ENCODE measurements at regions of chrX and their contacts with region 1.

Region 1: GRCh38 chrX:49043220-49043986 is at the start of gene TFE3:
- DNase-seq: peak; percentile 97
- ATAC-seq: peak; percentile 87
- H3K4me3 ChIP-seq: peak within 1 kb of the TSS; percentile 69 to 77 (median 73)
- H3K4me3 Mint-ChIP-seq: peak within 1 kb of the TSS; percentile 91
- H3K27ac ChIP-seq: peak within 1 kb of the TSS; percentile 91 to 96
- H3K27ac Mint-ChIP-seq: peak within 1 kb of the TSS; percentile 92
- H3K4me1 ChIP-seq: peaks cover 12 to 25% of the 10 kb centered on the region in 2 donors
- H3K4me1 Mint-ChIP-seq: peaks cover 28% of the 10 kb centered on the region
- H3K27me3 ChIP-seq: no peaks in the 10 kb centered on the region
- H3K27me3 Mint-ChIP-seq: no peaks in the 10 kb centered on the region
- CTCF ChIP-seq: peak; percentile 62
- total RNA-seq, gene TFE3: 38.9 and 42.1 TPM in 2 replicates

Region 2: DNA sequence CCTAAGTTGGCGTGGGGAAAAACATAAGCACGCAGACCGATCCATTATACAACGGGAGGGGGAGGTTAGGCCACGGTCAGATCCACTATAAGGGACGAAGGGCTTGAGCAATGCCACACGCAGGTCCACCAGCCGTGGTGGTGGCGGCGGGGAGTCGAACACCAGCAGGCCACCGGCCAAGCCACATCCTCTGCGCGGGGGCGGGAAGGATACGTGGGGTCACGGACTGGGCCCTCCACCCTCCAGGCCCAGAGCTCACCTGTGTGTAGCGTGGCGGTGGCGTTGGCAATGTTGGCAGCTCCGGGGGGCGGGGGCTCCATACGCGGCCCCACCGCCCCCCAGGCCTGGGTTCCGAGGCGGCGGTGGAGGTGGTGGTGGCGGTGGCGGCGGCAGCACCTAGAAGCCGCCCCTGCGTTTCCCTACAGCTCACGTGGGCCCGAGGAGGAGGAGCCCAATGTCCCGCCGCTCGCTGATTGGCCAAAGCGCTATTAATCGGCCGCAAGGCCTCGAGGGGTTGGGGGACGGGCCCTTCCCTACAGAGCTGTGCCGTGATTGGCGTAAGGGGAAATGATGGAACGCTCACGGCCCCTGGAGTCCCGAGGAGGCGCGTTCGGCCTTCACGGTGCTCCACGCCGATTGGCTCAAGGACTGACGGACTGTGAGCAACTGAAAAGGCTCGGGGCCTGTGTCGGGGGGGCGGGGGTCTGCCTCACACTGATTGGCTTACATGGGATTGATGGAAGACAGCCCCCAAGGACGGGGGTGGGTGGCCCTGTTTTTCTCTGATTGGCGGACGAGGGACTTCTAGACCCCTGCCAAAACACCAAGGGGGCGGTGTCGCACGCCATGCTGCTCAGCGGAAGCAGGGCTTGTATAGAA is 1393.0 kb before region 1 on chrX and contains the start of gene ELK1:
- CTCF ChIA-PET with region 1: no interaction called
- POLR2A ChIA-PET with region 1: no interaction called
- intact Hi-C with region 1: loop called (anchors 10 kb)
- DNase-seq: peak; percentile 94
- ATAC-seq: peak; percentile 91
- H3K4me3 ChIP-seq: peak within 1 kb of the TSS in 4 of 5 experiments; percentile 68 to 77 (median 75)
- H3K4me3 Mint-ChIP-seq: peak within 1 kb of the TSS; percentile 93
- H3K27ac ChIP-seq: peak within 1 kb of the TSS; percentile 69 to 73
- H3K27ac Mint-ChIP-seq: peak within 1 kb of the TSS; percentile 94
- H3K4me1 ChIP-seq: peaks cover 11 to 26% of the 10 kb centered on the region in 2 donors
- H3K4me1 Mint-ChIP-seq: peaks cover 29% of the 10 kb centered on the region
- H3K27me3 ChIP-seq: no peaks in the 10 kb centered on the region
- H3K27me3 Mint-ChIP-seq: no peaks in the 10 kb centered on the region
- CTCF ChIP-seq: no peak
- total RNA-seq, gene ELK1: 20.8 and 22.7 TPM in 2 replicates

Region 3: DNA sequence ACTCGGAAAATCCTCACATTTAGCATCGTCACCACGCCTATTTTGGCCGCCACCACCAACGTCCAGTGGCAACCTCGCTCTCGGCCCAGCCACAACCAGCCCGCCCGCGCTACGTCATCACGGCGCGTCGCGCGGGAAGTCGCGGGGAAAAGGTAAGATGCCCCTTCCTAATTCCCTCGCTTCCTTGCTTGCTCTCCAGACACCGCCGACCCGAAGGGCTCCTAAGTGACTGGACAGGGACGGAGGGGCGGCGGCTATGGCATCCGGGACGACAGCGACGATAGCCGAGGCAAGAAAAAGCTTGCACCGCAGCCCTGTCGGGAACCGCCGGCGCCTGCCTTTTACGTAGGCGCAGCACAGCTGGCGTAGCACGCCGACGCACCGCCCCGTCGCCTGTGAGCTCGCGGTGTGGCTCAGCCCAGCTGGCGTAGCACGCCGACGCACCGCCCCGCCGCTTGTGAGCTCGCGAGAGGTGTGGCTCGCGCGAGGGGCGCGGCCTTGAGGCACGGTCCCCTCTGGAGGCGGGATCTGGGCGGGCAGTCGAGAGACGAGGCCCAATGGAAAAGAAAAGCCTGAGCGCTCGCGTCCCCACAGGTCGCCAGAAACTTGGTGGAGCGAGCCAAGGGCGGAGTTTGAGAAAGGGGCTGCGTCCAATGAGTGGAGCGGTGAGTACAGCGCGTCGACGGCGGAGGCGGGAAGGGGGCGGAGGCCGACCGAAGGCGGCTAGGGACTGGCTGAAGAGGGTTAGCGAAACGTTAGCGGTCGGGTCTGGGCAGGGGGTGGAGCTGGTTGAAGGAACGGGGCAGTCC is 241.9 kb before region 1 on chrX and contains the start of gene HDAC6:
- CTCF ChIA-PET with region 1: no interaction called
- POLR2A ChIA-PET with region 1: no interaction called
- intact Hi-C with region 1: loop called (anchors 5 kb)
- DNase-seq: peak; percentile 97
- ATAC-seq: peak; percentile 80
- H3K4me3 ChIP-seq: peak within 1 kb of the TSS; percentile 65 to 82 (median 76)
- H3K4me3 Mint-ChIP-seq: peak within 1 kb of the TSS; percentile 96
- H3K27ac ChIP-seq: peak within 1 kb of the TSS; percentile 95 to 96
- H3K27ac Mint-ChIP-seq: peak within 1 kb of the TSS; percentile 98
- H3K4me1 ChIP-seq: peaks cover 4 to 16% of the 10 kb centered on the region in 2 donors
- H3K4me1 Mint-ChIP-seq: peaks cover 14% of the 10 kb centered on the region
- H3K27me3 ChIP-seq: no peaks in the 10 kb centered on the region
- H3K27me3 Mint-ChIP-seq: no peaks in the 10 kb centered on the region
- CTCF ChIP-seq: no peak
- total RNA-seq, gene HDAC6: 168 and 170 TPM in 2 replicates

Region 4: DNA sequence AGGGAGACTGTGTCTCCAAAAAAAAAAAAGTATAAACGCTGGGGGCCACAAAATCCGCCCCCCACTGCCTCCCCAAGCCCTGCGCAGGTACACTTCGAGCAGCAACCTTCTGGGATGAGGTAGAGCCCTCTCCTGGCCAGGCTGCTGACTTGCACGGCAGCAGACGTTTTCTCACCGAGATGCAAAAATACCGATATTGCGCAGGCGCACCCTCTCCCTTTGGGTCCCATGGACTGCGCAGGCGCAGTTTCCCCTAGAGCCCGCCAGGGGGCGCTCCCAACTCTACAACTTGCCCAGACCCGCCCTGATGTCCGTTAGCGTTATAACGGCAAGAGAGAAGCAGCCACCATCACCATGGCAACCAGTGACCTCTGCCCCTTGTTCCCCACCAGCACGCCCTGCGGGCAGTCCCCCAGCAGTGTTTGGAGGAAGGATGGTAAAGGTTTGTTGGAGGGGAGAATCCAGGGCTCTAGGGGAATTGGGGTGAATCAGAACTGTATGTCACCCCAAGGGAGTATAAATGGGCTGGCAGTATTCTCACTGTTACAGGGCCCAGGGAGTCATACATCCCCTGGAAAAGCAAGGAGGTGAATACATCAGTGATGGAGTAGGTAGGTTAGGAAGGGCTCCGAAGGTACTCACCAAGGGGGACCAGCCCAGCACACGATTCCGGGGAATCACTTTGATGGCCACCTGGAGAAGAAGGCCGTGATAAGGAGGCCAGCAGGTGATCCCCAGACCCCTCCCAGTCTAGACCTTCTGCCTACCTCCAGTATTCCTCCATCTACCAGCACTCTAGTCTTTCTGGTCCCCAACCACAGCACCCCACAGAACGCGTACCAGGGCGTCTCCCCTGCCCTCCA is 126.0 kb before region 1 on chrX:
- CTCF ChIA-PET with region 1: no interaction called
- POLR2A ChIA-PET with region 1: no interaction called
- intact Hi-C with region 1: loop called (anchors 1 kb)
- DNase-seq: peak; percentile 92
- ATAC-seq: peak; percentile 46
- H3K4me3 ChIP-seq: peak overlapping the region; percentile 67 to 94 (median 86)
- H3K4me3 Mint-ChIP-seq: peak overlapping the region; percentile 98
- H3K27ac ChIP-seq: peak overlapping the region; percentile 84
- H3K27ac Mint-ChIP-seq: peak overlapping the region; percentile 96
- H3K4me1 ChIP-seq: peaks cover 34 to 56% of the 10 kb centered on the region in 2 donors
- H3K4me1 Mint-ChIP-seq: peaks cover 51% of the 10 kb centered on the region
- H3K27me3 ChIP-seq: no peaks in the 10 kb centered on the region
- H3K27me3 Mint-ChIP-seq: no peaks in the 10 kb centered on the region
- CTCF ChIP-seq: peak; percentile 74

Region 5: DNA sequence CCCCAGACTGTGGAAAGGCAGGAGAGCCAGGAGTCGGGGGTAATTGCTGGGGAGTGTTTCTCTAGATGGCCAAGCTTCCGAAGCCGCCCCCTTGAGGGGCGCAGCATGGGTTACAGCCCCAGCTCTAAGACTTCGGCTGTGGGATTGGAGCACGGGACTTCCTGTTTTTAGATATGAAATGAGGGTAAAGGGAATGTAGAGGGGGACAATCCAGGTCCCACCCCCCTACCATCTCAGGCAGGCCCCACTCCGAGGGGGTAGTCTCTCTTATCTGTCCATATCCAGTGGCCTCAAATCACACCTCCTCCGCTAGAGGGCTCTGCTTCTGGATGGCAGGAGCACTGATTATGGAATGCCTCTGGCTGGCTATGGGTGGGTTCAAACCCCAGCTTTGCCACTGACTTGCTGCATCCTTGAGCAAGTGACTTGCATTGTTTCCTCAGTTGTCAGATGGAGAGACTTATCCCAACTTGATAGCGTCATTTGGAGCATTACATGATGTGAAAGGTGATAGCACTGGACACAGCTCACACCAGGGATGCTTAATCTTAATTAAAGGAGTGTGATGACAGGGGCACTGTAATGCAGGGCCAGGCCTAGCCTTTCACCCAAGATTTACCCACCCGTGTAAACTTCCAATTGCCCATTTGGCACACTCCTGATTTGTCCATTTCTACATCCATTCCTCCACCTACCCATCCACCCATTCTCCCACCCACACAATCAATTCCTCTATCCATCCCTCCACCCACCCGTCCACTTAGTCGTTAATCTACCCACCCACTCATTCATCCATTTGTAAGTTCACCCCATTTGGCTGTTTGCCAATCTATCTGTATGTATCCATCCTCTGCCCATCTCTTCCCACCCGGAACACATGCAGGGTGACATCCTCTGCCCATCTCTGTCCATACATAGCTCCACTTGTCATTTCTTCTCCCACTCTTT is 70.9 kb before region 1 on chrX:
- CTCF ChIA-PET with region 1: interaction called, 16 read pairs
- POLR2A ChIA-PET with region 1: no interaction called
- intact Hi-C with region 1: loop called (anchors 1 kb)
- DNase-seq: peak; percentile 55
- ATAC-seq: peak; percentile 61
- H3K4me3 ChIP-seq: peak overlapping the region in 4 of 5 experiments; percentile 13 to 41 (median 28)
- H3K4me3 Mint-ChIP-seq: peak overlapping the region; percentile 66
- H3K27ac ChIP-seq: no peak overlapping the region
- H3K27ac Mint-ChIP-seq: peak overlapping the region; percentile 50
- H3K4me1 ChIP-seq: peaks cover 12 to 14% of the 10 kb centered on the region in 2 donors
- H3K4me1 Mint-ChIP-seq: peaks cover 15% of the 10 kb centered on the region
- H3K27me3 ChIP-seq: no peaks in the 10 kb centered on the region
- H3K27me3 Mint-ChIP-seq: no peaks in the 10 kb centered on the region
- CTCF ChIP-seq: peak; percentile 56

Region 6: DNA sequence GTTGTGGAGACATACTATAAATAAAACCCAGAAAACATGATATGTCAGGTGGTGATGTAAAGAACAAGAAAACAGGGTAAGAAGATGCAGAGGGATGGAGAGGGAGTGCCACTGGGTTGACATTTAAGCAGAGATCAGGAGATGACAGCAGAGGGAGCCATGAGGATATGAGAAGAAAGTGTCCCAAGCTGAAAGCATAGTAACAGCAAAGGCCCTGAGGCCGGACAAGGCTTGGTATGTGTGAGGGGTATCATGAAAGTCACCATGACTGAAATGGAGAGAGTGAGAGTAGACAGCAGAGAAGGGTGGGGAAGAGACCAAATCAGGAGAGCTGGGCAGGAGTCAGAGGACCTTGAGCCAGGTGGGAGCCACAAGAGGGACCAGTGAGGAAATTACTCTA is 76.7 kb after region 1 on chrX:
- CTCF ChIA-PET with region 1: no interaction called
- POLR2A ChIA-PET with region 1: no interaction called
- intact Hi-C with region 1: loop called (anchors 1 kb)
- DNase-seq: no peak
- ATAC-seq: no peak
- H3K4me3 ChIP-seq: no peak overlapping the region
- H3K4me3 Mint-ChIP-seq: peak overlapping the region; percentile 0
- H3K27ac ChIP-seq: no peak overlapping the region
- H3K27ac Mint-ChIP-seq: no peak overlapping the region
- H3K4me1 ChIP-seq: peaks cover 4 to 18% of the 10 kb centered on the region in 2 donors
- H3K4me1 Mint-ChIP-seq: peaks cover 29% of the 10 kb centered on the region
- H3K27me3 ChIP-seq: no peaks in the 10 kb centered on the region
- H3K27me3 Mint-ChIP-seq: no peaks in the 10 kb centered on the region
- CTCF ChIP-seq: no peak

Measured in B cell (primary cell).